Esophagus squamous epithelium (tissue), 5 donors: ENCODE measurements at regions of chr1 and their contacts with region 1.

Region 1: DNA sequence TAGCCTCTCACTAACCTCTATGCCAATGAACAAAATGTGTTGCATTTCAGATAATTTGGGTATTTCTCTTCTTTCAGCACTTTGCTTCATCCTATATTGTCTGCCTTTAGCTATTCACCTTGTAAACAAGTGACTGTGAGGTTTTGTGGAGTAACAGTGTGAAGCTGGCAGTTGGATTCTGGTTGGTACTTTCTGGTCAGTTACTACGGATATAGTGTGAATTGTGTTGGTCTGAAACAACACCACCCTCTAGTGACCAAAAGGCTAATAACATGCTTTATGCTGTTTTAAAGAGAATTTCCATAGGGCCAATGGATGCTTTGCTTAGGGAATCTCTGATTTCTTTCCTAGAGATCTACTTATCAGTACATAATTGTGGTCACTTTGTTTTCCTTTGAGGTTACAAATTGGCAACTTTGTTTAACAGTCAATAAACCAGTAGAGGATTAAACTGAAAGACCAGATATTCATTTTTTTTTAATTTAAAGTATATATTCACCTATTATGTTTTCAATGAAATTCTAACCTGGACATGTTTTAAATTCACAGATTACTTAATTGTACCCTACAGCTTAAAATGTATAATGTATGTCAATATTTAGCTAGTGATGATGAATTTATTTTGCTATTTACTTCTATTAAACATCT is 2.5 kb upstream of the PTGER3 start:
- DNase-seq: no peak
- H3K4me3 ChIP-seq: no peak overlapping the region
- H3K27ac ChIP-seq: no peak overlapping the region
- H3K4me1 ChIP-seq: peaks cover 8 to 24% (median 13%) of the 10 kb centered on the region in 3 donors
- H3K27me3 ChIP-seq: peaks cover 0 to 56% (median 2%) of the 10 kb centered on the region in 4 donors
- CTCF ChIP-seq: peak; percentile 15 to 73 (median 65)
- POLR2A ChIP-seq: no peak

Region 2: DNA sequence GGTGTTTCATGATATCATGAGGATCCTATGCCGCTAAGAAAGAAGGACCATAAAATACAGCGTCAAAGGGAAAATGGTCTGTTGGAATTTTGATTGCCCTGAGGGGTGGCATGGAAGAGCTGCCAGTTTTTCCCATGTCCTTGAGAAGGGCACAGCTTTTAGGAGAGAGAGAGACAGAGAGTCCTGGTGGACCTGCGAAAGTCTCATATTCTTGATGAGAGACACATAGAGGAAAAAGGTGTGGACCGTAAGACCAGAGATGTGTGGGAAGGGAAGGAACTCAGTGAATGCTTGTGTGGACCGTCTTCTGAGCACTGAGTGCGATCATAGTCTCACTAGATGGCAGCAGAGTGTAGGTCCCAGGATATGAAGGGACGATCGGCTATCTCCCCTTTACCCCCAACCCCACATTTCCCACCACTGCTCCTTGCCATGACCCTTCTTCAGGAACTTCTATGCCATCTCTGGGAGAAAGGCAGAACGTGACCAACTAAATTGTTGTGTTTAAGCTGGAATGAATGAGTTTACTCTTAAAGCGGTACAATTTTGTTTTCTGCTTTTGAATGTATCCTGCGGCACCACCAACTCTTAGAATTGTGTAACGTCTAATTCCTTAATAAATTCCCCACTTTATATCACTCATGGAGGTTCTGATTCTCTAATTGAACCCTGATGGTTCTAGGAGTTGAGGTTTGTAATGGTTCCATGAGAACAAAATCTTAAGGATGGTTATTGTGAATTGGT is 521.3 kb before region 1 on chr1:
- intact Hi-C with region 1: loop called (anchors 10 kb)
- DNase-seq: no peak
- H3K4me3 ChIP-seq: no peak overlapping the region
- H3K27ac ChIP-seq: no peak overlapping the region
- H3K4me1 ChIP-seq: no peaks in the 10 kb centered on the region
- H3K27me3 ChIP-seq: no peaks in the 10 kb centered on the region
- CTCF ChIP-seq: peak in 3 of 6 experiments; percentile 14 to 44 (median 29)
- POLR2A ChIP-seq: no peak

Region 3: GRCh38 chr1:70685300-70686241 is 364.5 kb before region 1 on chr1:
- intact Hi-C with region 1: loop called (anchors 10 kb)
- DNase-seq: no peak
- H3K4me3 ChIP-seq: no peak overlapping the region
- H3K27ac ChIP-seq: no peak overlapping the region
- H3K4me1 ChIP-seq: no peaks in the 10 kb centered on the region
- H3K27me3 ChIP-seq: no peaks in the 10 kb centered on the region
- CTCF ChIP-seq: peak in 5 of 6 experiments; percentile 63 to 80 (median 73)
- POLR2A ChIP-seq: no peak